Activated CD8-positive, alpha-beta T cell treated with anti-CD3 and anti-CD28 coated beads for 36 hours (primary cell): ENCODE measurements at regions of chr1 and their contacts with region 1.

Region 1: DNA sequence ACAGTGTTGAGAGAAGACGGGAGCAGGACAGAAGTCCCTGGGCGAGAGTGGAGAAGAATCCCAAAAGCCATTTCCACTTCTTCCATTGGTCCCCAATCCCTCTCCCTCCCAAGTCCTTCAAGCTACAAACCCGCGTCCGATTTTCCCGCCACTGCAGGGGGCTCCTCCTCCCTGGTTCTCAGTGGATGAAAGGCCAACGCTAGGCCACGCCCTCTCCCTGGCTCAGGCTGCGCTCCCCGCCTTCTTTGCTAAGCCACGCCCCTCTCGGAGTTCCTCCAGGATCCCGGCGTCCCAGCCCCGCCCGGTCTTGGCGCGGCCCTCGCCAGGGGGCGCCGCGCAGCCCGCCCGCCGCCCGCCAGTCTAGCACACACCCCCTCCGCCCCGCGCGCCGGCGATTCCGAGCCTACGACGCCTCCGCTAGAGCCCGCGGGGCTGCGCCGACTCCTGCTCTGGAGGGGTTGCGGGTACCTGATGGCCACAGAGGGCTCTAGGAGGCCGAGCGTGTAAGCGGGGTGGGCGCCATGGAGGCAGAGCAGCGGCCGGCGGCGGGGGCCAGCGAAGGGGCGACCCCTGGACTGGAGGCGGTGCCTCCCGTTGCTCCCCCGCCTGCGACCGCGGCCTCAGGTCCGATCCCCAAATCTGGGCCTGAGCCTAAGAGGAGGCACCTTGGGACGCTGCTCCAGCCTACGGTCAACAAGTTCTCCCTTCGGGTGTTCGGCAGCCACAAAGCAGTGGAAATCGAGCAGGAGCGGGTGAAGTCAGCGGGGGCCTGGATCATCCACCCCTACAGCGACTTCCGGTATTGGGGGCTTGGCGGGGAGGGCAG is at the start of gene HCN3:
- DNase-seq: peak; percentile 96
- ATAC-seq: peak; percentile 72
- H3K4me3 Mint-ChIP-seq: peak within 1 kb of the TSS; percentile 54
- H3K27ac Mint-ChIP-seq: no peak within 1 kb of the TSS
- H3K4me1 Mint-ChIP-seq: peaks cover 29% of the 10 kb centered on the region
- H3K27me3 Mint-ChIP-seq: no peaks in the 10 kb centered on the region
- CTCF ChIP-seq: peak; percentile 73
- total RNA-seq, gene HCN3: 1.5 TPM

Region 2: DNA sequence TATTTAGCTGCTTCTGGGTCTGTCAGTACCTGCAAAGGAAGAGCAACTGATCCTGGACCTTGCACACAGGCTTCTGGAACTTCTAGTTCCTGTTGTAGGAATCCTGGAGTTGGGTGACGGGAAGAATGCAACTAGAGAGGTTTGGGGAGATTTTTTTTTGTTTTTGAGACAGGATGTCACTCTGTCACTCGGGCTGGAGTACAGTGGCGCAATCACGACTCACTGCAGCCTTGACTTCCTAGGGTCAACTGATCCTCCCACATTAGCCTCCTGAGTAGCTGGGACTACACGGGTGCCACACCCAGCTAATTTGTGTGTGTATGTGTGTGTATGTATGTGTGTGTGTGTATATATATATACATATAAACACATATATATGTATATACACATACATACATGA is 40.8 kb before region 1 on chr1:
- CTCF ChIA-PET with region 1: no interaction called
- POLR2A ChIA-PET with region 1: no interaction called
- intact Hi-C with region 1: no loop called
- DNase-seq: no peak
- ATAC-seq: no peak
- H3K4me3 Mint-ChIP-seq: no peak overlapping the region
- H3K27ac Mint-ChIP-seq: no peak overlapping the region
- H3K4me1 Mint-ChIP-seq: peaks cover 12% of the 10 kb centered on the region
- H3K27me3 Mint-ChIP-seq: no peaks in the 10 kb centered on the region
- CTCF ChIP-seq: no peak

Region 3: GRCh38 chr1:155261852-155262673 is 15.2 kb before region 1 on chr1 and contains the start of gene SCAMP3:
- CTCF ChIA-PET with region 1: interaction called, 8 read pairs
- POLR2A ChIA-PET with region 1: interaction called, 37 read pairs
- intact Hi-C with region 1: no loop called
- DNase-seq: peak; percentile 97
- ATAC-seq: peak; percentile 93
- H3K4me3 Mint-ChIP-seq: peak within 1 kb of the TSS; percentile 96
- H3K27ac Mint-ChIP-seq: peak within 1 kb of the TSS; percentile 89
- H3K4me1 Mint-ChIP-seq: peaks cover 29% of the 10 kb centered on the region
- H3K27me3 Mint-ChIP-seq: no peaks in the 10 kb centered on the region
- CTCF ChIP-seq: no peak
- total RNA-seq, gene SCAMP3: 81.3 to 97.2 TPM

Region 4: DNA sequence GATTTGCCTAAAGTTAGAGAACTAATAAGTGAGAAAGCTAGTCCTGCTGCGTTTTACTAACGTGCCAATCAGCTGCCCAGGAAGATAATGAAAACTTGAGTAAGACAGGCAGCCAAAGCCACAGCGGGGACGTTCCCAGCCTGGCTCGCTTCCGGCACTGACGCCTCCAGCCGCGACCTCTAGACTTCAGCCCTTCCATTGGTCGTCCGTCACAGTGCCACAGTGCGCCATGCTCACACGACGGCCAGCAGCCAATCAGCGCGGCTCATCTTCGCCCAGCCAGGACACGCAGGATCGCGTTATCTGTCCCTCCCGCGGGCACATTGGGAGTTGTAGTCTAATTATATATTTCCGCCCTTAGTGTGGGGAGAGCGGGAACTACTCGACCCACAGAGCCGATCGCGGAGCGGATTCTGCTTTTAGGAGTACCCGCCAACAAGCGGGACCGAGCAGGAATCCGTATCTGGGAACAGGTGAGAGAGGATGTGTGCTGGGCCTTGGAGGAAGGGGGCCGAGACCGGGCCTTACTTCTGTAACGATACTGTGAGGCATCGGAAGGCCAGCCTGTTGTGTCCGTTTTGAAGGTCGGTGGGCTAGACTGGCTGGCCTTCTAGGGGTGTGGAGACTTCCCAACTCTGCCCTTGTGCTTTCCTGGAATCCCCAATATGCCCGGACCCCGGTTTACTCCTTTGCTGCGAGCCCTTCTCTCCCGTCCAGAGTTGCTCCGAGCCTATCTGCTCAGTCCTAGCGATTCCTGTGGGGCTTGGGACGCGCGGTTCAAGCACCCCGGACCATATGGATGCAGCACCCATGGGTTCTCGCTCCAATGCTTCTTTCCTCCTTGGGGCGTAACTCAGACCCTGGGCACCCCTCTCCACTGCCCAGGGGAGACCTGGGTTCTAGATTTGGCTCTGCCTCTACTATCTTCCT is 31.5 kb after region 1 on chr1 and contains the start of gene FDPS:
- CTCF ChIA-PET with region 1: interaction called, 15 read pairs
- POLR2A ChIA-PET with region 1: interaction called, 3 read pairs
- intact Hi-C with region 1: no loop called
- DNase-seq: peak; percentile 99
- ATAC-seq: peak; percentile 98
- H3K4me3 Mint-ChIP-seq: peak within 1 kb of the TSS; percentile 92
- H3K27ac Mint-ChIP-seq: peak within 1 kb of the TSS; percentile 99
- H3K4me1 Mint-ChIP-seq: peaks cover 29% of the 10 kb centered on the region
- H3K27me3 Mint-ChIP-seq: no peaks in the 10 kb centered on the region
- CTCF ChIP-seq: no peak
- total RNA-seq, gene FDPS: 293 to 316 TPM

Region 5: DNA sequence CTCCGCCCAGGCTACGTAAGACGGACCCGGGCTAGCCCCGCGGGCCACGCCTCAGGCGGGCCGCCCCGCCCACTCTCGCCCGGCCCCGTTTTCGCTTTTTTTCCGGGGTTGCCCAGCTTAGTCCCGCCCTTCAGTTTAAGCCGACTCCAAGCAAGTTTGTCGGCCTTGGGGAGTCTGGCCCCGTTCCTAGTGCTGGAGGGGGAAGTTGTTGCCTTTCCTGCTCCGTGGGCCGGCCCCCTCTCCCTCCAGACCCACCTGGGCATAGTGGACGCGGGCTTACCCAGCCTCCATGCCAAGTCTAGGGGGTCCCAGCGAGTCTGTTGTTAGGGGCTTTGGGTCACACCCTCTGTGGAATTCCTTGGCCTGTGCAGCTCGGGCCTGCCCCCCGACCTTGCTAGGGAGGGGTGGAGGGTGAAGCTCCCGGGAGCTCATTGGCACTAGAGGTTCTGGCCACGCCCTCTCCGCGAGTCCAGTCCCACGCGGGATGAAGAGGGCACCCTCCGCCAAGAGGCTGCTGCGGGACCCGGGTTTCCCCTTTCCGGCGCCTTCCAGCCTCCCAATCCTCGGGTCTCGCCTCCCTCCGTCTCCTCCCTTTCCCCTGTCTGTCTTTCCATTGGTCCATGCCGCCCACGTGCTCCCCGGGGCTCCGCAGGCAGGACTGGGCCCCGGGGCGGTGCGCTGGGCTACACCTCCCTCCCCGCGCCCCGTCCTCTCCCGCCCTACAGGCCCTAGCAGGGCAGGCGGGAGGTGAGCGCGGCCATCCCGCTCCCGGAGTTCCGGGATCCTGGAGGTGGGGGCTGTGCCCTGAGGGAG is 46.7 kb after region 1 on chr1:
- CTCF ChIA-PET with region 1: interaction called, 14 read pairs
- POLR2A ChIA-PET with region 1: interaction called, 4 read pairs
- intact Hi-C with region 1: loop called (anchors 5 kb)
- DNase-seq: peak; percentile 95
- ATAC-seq: peak; percentile 78
- H3K4me3 Mint-ChIP-seq: peak overlapping the region; percentile 81
- H3K27ac Mint-ChIP-seq: peak overlapping the region; percentile 75
- H3K4me1 Mint-ChIP-seq: peaks cover 42% of the 10 kb centered on the region
- H3K27me3 Mint-ChIP-seq: no peaks in the 10 kb centered on the region
- CTCF ChIP-seq: no peak